CD4-positive, alpha-beta memory T cell (primary cell): ENCODE measurements at regions of chr6 and their contacts with region 1.

Region 1: GRCh38 chr6:12137480-12137879 is 125.4 kb downstream of the HIVEP1 start:
- DNase-seq: no peak
- H3K4me3 ChIP-seq: no peak overlapping the region
- H3K4me3 Mint-ChIP-seq: no peak overlapping the region
- H3K27ac ChIP-seq: no peak overlapping the region
- H3K27ac Mint-ChIP-seq: peak overlapping the region in 1 of 7 donors; percentile 12
- H3K4me1 ChIP-seq: peaks cover 21% of the 10 kb centered on the region
- H3K4me1 Mint-ChIP-seq: peaks cover 11 to 21% (median 17%) of the 10 kb centered on the region in 4 donors
- H3K27me3 ChIP-seq: no peaks in the 10 kb centered on the region
- H3K27me3 Mint-ChIP-seq: no peaks in the 10 kb centered on the region

Region 2: GRCh38 chr6:11537229-11538051 is 600.0 kb before region 1 on chr6 and contains the start of gene TMEM170B:
- CTCF ChIA-PET with region 1: no interaction called
- POLR2A ChIA-PET with region 1: no interaction called
- intact Hi-C with region 1: no loop called
- DNase-seq: peak; percentile 94 to 98 (median 97)
- H3K4me3 ChIP-seq: peak within 1 kb of the TSS; percentile 60 to 77
- H3K4me3 Mint-ChIP-seq: peak within 1 kb of the TSS; percentile 86 to 92 (median 90)
- H3K27ac ChIP-seq: peak within 1 kb of the TSS; percentile 54
- H3K27ac Mint-ChIP-seq: peak within 1 kb of the TSS; percentile 72 to 94 (median 92)
- H3K4me1 ChIP-seq: peaks cover 11% of the 10 kb centered on the region
- H3K4me1 Mint-ChIP-seq: peaks cover 7 to 24% (median 9%) of the 10 kb centered on the region in 4 donors
- H3K27me3 ChIP-seq: no peaks in the 10 kb centered on the region
- H3K27me3 Mint-ChIP-seq: peaks cover 2 to 4% of the 10 kb centered on the region in 2 donors
- total RNA-seq, gene TMEM170B: 1.9 to 2.1 TPM

Region 3: GRCh38 chr6:12051861-12052368 is 85.6 kb before region 1 on chr6:
- CTCF ChIA-PET with region 1: no interaction called
- POLR2A ChIA-PET with region 1: no interaction called
- intact Hi-C with region 1: loop called (anchors 1 kb)
- DNase-seq: peak; percentile 68 to 86 (median 69)
- H3K4me3 ChIP-seq: no peak overlapping the region
- H3K4me3 Mint-ChIP-seq: peak overlapping the region; percentile 18 to 77 (median 64)
- H3K27ac ChIP-seq: peak overlapping the region; percentile 28
- H3K27ac Mint-ChIP-seq: peak overlapping the region; percentile 73 to 96 (median 92)
- H3K4me1 ChIP-seq: peaks cover 33% of the 10 kb centered on the region
- H3K4me1 Mint-ChIP-seq: peaks cover 27 to 73% (median 47%) of the 10 kb centered on the region in 4 donors
- H3K27me3 ChIP-seq: no peaks in the 10 kb centered on the region
- H3K27me3 Mint-ChIP-seq: no peaks in the 10 kb centered on the region